ENCODE measurements at regions of chr12 and their contacts with region 1.

Region 1: DNA sequence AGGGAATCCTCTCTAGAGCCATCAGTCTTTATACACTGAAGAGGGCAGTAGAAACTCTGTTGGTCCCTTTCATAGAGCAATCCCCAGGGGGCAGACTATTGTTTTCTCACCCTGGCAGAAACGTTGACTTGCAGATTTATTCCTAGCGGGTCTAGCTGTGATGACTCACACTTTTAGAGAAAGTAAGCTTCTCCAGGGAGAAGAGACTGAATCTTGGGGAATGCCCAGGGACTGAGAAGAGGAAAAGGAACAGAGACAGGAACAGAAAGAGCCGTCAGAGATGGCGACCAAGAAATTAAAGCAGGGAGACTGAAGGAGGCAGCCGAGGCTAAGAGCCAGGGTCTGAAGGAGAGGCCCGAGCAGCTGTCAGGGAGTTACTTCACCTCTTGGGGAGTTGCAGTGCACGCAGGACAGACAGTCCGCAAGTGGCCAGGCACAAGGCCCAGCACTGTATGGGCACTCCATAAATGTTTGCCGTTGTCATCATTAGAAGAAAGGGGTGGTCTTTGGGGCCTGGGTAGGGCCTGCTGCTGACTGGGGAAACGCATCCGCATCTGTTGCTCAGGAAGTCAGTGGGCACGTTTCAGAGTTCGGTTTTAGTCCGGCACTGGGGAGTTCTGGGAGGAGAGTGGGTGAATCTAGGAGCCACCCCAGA is 13.0 kb downstream of the PLEKHG6 start:
- DNase-seq: no peak
- H3K4me3 ChIP-seq: peak overlapping the region in 1 of 4 donors; percentile 4
- H3K27ac ChIP-seq: peak overlapping the region; percentile 81 to 85 (median 83)
- H3K4me1 ChIP-seq: peaks cover 12 to 58% (median 36%) of the 10 kb centered on the region in 4 donors
- H3K27me3 ChIP-seq: no peaks in the 10 kb centered on the region
- CTCF ChIP-seq: peak; percentile 36 to 62 (median 47)
- EP300 ChIP-seq: no peak
- POLR2A ChIP-seq: peak; percentile 36

Region 2: DNA sequence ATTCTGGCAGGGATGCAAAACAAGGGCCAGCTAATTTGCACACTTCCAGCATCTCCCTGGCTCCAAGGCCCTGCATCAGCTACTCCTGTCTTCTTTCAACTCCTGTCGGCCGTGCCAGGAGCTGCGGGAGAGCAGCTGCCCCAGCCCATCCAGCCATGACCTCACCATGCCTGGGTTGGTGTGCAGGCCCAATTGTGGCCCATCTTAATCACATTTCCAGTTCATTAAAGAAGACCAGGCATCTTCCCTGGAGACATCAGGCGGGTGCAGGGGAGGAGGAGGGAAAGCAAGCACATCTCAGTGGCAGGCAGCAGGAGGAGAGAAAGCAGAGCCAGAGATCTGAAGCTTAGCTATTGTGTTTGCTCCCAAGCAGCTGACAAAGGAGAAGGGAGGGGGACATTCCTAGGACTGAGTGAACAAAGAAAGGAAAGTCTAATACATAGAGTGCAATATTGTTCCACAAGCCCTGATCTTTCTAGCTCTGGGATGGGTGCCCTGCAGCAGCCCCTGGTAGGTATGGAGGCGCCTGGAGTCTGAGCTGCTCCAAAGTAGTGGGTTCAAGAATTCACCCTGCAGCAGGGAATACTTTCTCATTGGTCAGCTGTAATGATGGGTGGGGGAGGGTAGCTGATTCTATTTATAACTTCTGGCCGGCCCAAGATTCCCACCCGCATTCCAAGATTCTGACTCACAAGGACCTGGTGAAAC is 239.1 kb before region 1 on chr12:
- in situ Hi-C with region 1: no loop called
- intact Hi-C with region 1: no loop called
- DNase-seq: peak; percentile 15
- H3K4me3 ChIP-seq: no peak overlapping the region
- H3K27ac ChIP-seq: peak overlapping the region in 3 of 4 donors; percentile 39 to 61 (median 59)
- H3K4me1 ChIP-seq: peaks cover 5 to 24% (median 9%) of the 10 kb centered on the region in 4 donors
- H3K27me3 ChIP-seq: no peaks in the 10 kb centered on the region
- CTCF ChIP-seq: no peak
- EP300 ChIP-seq: no peak
- POLR2A ChIP-seq: no peak

Region 3: GRCh38 chr12:6423267-6424007 is 100.0 kb after region 1 on chr12:
- in situ Hi-C with region 1: no loop called
- intact Hi-C with region 1: no loop called
- DNase-seq: peak; percentile 87
- H3K4me3 ChIP-seq: no peak overlapping the region
- H3K27ac ChIP-seq: peak overlapping the region; percentile 41 to 53 (median 46)
- H3K4me1 ChIP-seq: peaks cover 4 to 17% (median 11%) of the 10 kb centered on the region in 4 donors
- H3K27me3 ChIP-seq: no peaks in the 10 kb centered on the region
- CTCF ChIP-seq: peak; percentile 79 to 97 (median 88)
- EP300 ChIP-seq: no peak
- POLR2A ChIP-seq: no peak

Region 4: DNA sequence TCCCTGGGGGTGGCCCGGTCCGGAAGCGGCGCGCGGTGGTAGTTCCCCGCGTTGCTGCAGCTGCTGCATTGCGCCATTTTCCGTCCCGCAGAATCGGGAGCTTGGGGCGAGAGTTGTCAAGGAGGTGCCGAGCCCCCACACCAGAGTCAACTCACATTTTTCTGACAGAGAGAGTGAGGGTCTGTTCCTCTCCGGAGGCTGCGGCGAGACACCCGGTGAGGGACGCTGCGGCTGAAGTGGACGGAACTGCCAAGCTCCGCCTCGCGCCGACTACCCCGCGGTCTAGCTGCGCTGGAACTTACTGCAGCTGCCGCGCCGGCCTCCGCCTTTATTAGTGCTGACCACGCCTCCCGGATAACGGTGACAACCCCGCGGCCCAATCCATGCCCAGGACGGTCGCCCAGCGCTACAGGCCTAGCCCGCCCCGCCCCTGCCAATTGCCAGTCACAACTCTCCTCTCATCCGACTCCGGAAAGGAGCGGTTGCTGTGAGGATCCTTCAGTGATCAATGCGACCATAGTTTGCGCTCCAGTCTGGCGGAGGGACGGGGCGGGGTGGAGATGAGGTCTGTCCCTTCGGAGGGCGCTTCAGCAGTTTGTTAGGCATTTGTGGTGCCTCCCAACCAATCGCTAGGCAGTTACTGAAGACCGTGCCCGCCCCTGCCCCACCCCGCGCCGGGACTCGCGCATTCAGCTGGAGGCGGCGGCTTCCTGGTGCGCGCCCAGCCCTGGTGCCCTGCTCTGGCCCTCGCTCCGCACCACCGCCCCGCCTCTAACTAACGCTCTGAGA is 147.1 kb after region 1 on chr12 and contains the start of gene VAMP1:
- in situ Hi-C with region 1: loop called in 2 of 4 experiments (anchors 25 kb)
- intact Hi-C with region 1: loop called (anchors 5 kb)
- DNase-seq: peak; percentile 98
- H3K4me3 ChIP-seq: peak within 1 kb of the TSS; percentile 49 to 78 (median 64)
- H3K27ac ChIP-seq: peak within 1 kb of the TSS; percentile 88 to 96 (median 90)
- H3K4me1 ChIP-seq: peaks cover 8 to 40% (median 33%) of the 10 kb centered on the region in 4 donors
- H3K27me3 ChIP-seq: no peaks in the 10 kb centered on the region
- CTCF ChIP-seq: peak in 1 of 5 experiments; percentile 36
- EP300 ChIP-seq: no peak
- POLR2A ChIP-seq: peak; percentile 99
- total RNA-seq, gene VAMP1: 2.6 to 23.1 (median 17.7) TPM

Region 5: DNA sequence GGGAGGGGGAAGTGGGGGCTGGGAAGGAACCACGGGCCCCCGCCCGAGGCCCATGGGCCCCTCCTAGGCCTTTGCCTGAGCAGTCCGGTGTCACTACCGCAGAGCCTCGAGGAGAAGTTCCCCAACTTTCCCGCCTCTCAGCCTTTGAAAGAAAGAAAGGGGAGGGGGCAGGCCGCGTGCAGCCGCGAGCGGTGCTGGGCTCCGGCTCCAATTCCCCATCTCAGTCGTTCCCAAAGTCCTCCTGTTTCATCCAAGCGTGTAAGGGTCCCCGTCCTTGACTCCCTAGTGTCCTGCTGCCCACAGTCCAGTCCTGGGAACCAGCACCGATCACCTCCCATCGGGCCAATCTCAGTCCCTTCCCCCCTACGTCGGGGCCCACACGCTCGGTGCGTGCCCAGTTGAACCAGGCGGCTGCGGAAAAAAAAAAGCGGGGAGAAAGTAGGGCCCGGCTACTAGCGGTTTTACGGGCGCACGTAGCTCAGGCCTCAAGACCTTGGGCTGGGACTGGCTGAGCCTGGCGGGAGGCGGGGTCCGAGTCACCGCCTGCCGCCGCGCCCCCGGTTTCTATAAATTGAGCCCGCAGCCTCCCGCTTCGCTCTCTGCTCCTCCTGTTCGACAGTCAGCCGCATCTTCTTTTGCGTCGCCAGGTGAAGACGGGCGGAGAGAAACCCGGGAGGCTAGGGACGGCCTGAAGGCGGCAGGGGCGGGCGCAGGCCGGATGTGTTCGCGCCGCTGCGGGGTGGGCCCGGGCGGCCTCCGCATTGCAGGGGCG is 210.6 kb after region 1 on chr12 and contains the start of gene GAPDH:
- in situ Hi-C with region 1: loop called in 1 of 4 experiments (anchors 25 kb)
- intact Hi-C with region 1: loop called (anchors 10 kb)
- DNase-seq: peak; percentile 94
- H3K4me3 ChIP-seq: peak within 1 kb of the TSS; percentile 72 to 88 (median 78)
- H3K27ac ChIP-seq: peak within 1 kb of the TSS; percentile 94 to 98 (median 98)
- H3K4me1 ChIP-seq: peaks cover 31 to 60% (median 42%) of the 10 kb centered on the region in 4 donors
- H3K27me3 ChIP-seq: no peaks in the 10 kb centered on the region
- CTCF ChIP-seq: no peak
- EP300 ChIP-seq: no peak
- POLR2A ChIP-seq: peak; percentile 99
- total RNA-seq, gene GAPDH: 1,806 to 2,946 (median 2,333) TPM

Measured in transverse colon (tissue), 4 donors.